Natural killer cell (primary cell): ENCODE measurements at regions of chrX and their contacts with region 1.

Region 1: GRCh38 chrX:23901805-23902204 is 5.9 kb downstream of the APOO start:
- DNase-seq: peak in 1 of 2 donors; percentile 66
- ATAC-seq: peak; percentile 72 to 86 (median 80)
- H3K4me3 ChIP-seq: no peak overlapping the region
- H3K4me3 Mint-ChIP-seq: no peak overlapping the region
- H3K27ac ChIP-seq: no peak overlapping the region
- H3K27ac Mint-ChIP-seq: no peak overlapping the region
- H3K4me1 ChIP-seq: peaks cover 6% of the 10 kb centered on the region
- H3K4me1 Mint-ChIP-seq: no peaks in the 10 kb centered on the region
- H3K27me3 ChIP-seq: no peaks in the 10 kb centered on the region
- H3K27me3 Mint-ChIP-seq: no peaks in the 10 kb centered on the region
- CTCF ChIP-seq: peak; percentile 13

Region 2: DNA sequence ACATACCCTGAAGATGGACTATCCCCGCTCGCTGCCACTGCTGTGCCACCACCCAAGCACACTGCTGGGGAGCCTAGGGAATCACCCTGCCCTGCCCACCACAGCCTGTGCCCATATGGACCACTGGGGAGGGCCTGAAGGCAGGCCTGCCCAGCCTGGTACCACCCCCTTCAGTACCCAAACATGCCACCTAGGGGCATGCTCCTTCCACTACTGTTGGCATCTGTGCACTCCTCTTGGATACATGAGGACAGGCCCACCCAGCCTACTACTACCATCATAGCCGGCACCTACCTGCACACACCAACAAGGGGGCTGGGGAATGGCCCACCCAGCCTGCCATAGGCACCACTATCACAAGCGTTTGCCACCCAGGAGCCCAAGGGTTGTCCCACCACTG is 264.6 kb before region 1 on chrX:
- intact Hi-C with region 1: loop called (anchors 1 kb)
- DNase-seq: peak in 1 of 2 donors; percentile 31
- ATAC-seq: peak in 2 of 3 donors; percentile 72 to 93
- H3K4me3 ChIP-seq: no peak overlapping the region
- H3K4me3 Mint-ChIP-seq: no peak overlapping the region
- H3K27ac ChIP-seq: no peak overlapping the region
- H3K27ac Mint-ChIP-seq: no peak overlapping the region
- H3K4me1 ChIP-seq: no peaks in the 10 kb centered on the region
- H3K4me1 Mint-ChIP-seq: no peaks in the 10 kb centered on the region
- H3K27me3 ChIP-seq: no peaks in the 10 kb centered on the region
- H3K27me3 Mint-ChIP-seq: peaks cover 0 to 21% of the 10 kb centered on the region in 2 donors
- CTCF ChIP-seq: peak; percentile 47

Region 3: DNA sequence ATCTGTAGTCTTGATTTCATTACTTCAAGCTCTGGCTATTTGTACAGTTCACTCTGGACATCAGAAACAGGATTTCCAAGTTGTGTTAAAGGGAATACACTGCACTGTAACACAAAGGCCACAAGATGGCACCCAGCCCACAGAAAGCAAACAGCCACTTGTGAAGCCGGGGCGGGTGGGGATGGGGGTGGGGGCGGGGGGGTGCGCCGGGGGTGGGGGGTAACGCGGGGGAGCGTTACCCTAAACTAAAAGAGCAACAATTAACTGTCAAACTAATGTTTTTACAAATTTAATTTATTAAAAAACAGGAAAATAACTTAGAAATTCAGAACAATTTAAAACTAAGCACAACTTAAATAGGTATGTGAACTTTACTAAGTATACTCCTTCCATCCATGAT is 207.2 kb before region 1 on chrX:
- intact Hi-C with region 1: loop called (anchors 1 kb)
- DNase-seq: peak in 1 of 2 donors; percentile 73
- ATAC-seq: peak in 2 of 3 donors; percentile 83 to 84
- H3K4me3 ChIP-seq: no peak overlapping the region
- H3K4me3 Mint-ChIP-seq: no peak overlapping the region
- H3K27ac ChIP-seq: no peak overlapping the region
- H3K27ac Mint-ChIP-seq: no peak overlapping the region
- H3K4me1 ChIP-seq: peaks cover 3% of the 10 kb centered on the region
- H3K4me1 Mint-ChIP-seq: peaks cover 0 to 7% of the 10 kb centered on the region in 2 donors
- H3K27me3 ChIP-seq: no peaks in the 10 kb centered on the region
- H3K27me3 Mint-ChIP-seq: no peaks in the 10 kb centered on the region
- CTCF ChIP-seq: peak; percentile 19

Region 4: DNA sequence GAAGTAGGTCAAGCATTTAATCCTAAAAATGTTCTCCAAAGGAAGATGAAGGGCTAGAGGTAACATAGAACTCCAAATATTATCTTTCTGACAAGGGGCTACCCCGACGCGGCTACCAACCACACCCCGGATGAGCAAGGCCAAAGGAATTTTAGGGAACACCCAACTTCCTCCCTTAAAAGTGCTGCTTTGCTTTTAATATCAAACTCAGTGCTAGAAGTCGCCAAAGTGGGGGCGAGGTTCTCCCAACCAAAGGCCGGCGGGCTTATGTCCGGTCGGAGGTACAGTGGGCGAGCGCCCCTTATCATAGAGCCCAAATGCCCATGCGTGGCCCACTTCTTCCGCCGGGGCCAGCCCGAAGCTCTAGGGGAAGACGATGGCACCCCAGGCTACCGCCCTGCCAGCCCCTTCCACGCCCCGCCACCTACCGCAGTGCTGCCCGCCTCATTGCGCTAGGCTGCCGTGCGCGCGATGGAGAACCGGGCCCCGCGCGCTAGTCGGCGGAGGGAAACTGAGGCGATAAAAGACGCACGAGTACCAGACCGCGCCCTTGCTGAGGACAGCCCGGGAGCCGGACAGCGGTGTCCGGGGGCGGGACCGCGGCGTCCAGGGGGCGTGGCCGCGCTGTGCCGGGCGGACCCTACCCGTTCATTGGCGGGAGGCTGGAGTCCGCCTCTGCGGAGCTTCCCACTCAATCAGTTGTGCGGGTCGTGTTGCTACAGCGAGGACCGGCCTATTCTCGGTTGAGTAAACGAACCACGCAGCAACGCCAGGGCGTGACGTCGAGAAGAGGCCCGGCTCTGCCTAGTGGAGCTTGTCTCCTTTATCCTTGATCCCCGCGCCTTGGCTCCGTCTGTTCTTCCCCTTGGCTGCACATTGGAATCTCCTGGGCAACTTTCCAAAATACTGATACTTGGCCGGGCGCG is 158.8 kb before region 1 on chrX and contains the start of gene ACOT9:
- intact Hi-C with region 1: loop called (anchors 5 kb)
- DNase-seq: peak; percentile 69 to 76
- ATAC-seq: peak; percentile 95 to 99 (median 95)
- H3K4me3 ChIP-seq: peak within 1 kb of the TSS; percentile 69
- H3K4me3 Mint-ChIP-seq: peak within 1 kb of the TSS; percentile 81
- H3K27ac ChIP-seq: peak within 1 kb of the TSS; percentile 77
- H3K27ac Mint-ChIP-seq: peak within 1 kb of the TSS; percentile 54 to 87
- H3K4me1 ChIP-seq: peaks cover 27% of the 10 kb centered on the region
- H3K4me1 Mint-ChIP-seq: peaks cover 14 to 16% of the 10 kb centered on the region in 2 donors
- H3K27me3 ChIP-seq: no peaks in the 10 kb centered on the region
- H3K27me3 Mint-ChIP-seq: no peaks in the 10 kb centered on the region
- CTCF ChIP-seq: no peak
- total RNA-seq, gene ACOT9: 20.0 to 24.9 (median 21.4) TPM

Region 5: GRCh38 chrX:23756157-23756559 is 145.6 kb before region 1 on chrX:
- intact Hi-C with region 1: loop called (anchors 1 kb)
- DNase-seq: peak; percentile 44 to 80
- ATAC-seq: peak; percentile 72 to 77 (median 75)
- H3K4me3 ChIP-seq: no peak overlapping the region
- H3K4me3 Mint-ChIP-seq: no peak overlapping the region
- H3K27ac ChIP-seq: no peak overlapping the region
- H3K27ac Mint-ChIP-seq: no peak overlapping the region
- H3K4me1 ChIP-seq: no peaks in the 10 kb centered on the region
- H3K4me1 Mint-ChIP-seq: no peaks in the 10 kb centered on the region
- H3K27me3 ChIP-seq: no peaks in the 10 kb centered on the region
- H3K27me3 Mint-ChIP-seq: no peaks in the 10 kb centered on the region
- CTCF ChIP-seq: peak; percentile 57

Region 6: GRCh38 chrX:23844502-23845138 is 57.2 kb before region 1 on chrX:
- intact Hi-C with region 1: no loop called
- DNase-seq: no peak
- ATAC-seq: no peak
- H3K4me3 ChIP-seq: no peak overlapping the region
- H3K4me3 Mint-ChIP-seq: no peak overlapping the region
- H3K27ac ChIP-seq: no peak overlapping the region
- H3K27ac Mint-ChIP-seq: no peak overlapping the region
- H3K4me1 ChIP-seq: no peaks in the 10 kb centered on the region
- H3K4me1 Mint-ChIP-seq: no peaks in the 10 kb centered on the region
- H3K27me3 ChIP-seq: no peaks in the 10 kb centered on the region
- H3K27me3 Mint-ChIP-seq: no peaks in the 10 kb centered on the region
- CTCF ChIP-seq: no peak

Region 7: DNA sequence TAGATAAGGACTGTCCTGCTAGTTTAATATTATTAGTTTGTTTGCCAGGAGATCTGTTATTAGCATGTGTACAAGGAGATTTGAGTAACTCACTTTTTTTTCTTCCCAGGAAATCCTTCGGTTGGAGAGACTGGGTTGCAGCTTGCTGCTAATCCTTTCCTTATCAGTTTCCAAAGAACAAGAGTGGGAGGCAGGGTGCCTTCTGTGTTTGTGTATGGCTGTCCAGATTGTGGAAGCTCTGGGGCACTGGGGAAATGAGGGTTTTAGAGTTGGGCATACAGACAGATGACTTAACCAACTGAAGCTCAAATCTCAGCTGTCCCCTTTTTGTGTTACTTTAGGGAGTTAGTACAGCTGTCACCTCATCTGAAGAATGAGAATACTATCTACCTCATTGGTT is 446.1 kb after region 1 on chrX:
- intact Hi-C with region 1: no loop called
- DNase-seq: no peak
- ATAC-seq: no peak
- H3K4me3 ChIP-seq: no peak overlapping the region
- H3K4me3 Mint-ChIP-seq: no peak overlapping the region
- H3K27ac ChIP-seq: no peak overlapping the region
- H3K27ac Mint-ChIP-seq: no peak overlapping the region
- H3K4me1 ChIP-seq: no peaks in the 10 kb centered on the region
- H3K4me1 Mint-ChIP-seq: peaks cover 0 to 6% of the 10 kb centered on the region in 2 donors
- H3K27me3 ChIP-seq: no peaks in the 10 kb centered on the region
- H3K27me3 Mint-ChIP-seq: peaks cover 0 to 5% of the 10 kb centered on the region in 2 donors
- CTCF ChIP-seq: no peak